ENCODE measurements at regions of chrX and their contacts with region 1.

Region 1: GRCh38 chrX:101206471-101206870 is 13.1 kb upstream of the DRP2 start:
- DNase-seq: peak; percentile 13
- ATAC-seq: peak; percentile 82
- H3K4me3 ChIP-seq: no peak overlapping the region
- H3K27ac ChIP-seq: no peak overlapping the region
- H3K4me1 ChIP-seq: no peaks in the 10 kb centered on the region
- H3K27me3 ChIP-seq: no peaks in the 10 kb centered on the region
- CTCF ChIP-seq: peak in 2 of 3 experiments; percentile 42 to 58; a peak in 3 of 6 replicates
- POLR2A ChIP-seq: no peak
- RAD21 ChIP-seq: peak; percentile 72

Region 2: GRCh38 chrX:100685284-100685996 is 521.0 kb before region 1 on chrX:
- CTCF ChIA-PET with region 1: no interaction called
- POLR2A ChIA-PET with region 1: no interaction called
- RAD21 ChIA-PET with region 1: no interaction called
- intact Hi-C with region 1: loop called (anchors 5 kb)
- DNase-seq: peak; percentile 56
- ATAC-seq: peak; percentile 84
- H3K4me3 ChIP-seq: no peak overlapping the region
- H3K27ac ChIP-seq: no peak overlapping the region
- H3K4me1 ChIP-seq: no peaks in the 10 kb centered on the region
- H3K27me3 ChIP-seq: no peaks in the 10 kb centered on the region
- CTCF ChIP-seq: peak; percentile 72 to 98 (median 76)
- POLR2A ChIP-seq: no peak
- RAD21 ChIP-seq: peak; percentile 81

Region 3: GRCh38 chrX:100895365-100896075 is 311.0 kb before region 1 on chrX:
- CTCF ChIA-PET with region 1: no interaction called
- POLR2A ChIA-PET with region 1: no interaction called
- RAD21 ChIA-PET with region 1: no interaction called
- intact Hi-C with region 1: loop called (anchors 1 kb)
- DNase-seq: peak; percentile 26
- ATAC-seq: peak; percentile 86
- H3K4me3 ChIP-seq: no peak overlapping the region
- H3K27ac ChIP-seq: no peak overlapping the region
- H3K4me1 ChIP-seq: no peaks in the 10 kb centered on the region
- H3K27me3 ChIP-seq: no peaks in the 10 kb centered on the region
- CTCF ChIP-seq: peak; percentile 50 to 62 (median 53)
- POLR2A ChIP-seq: no peak
- RAD21 ChIP-seq: peak; percentile 85